Natural killer cell (primary cell): ENCODE measurements at regions of chr19 and their contacts with region 1.

Region 1: GRCh38 chr19:51372649-51373504 is at the start of gene NKG7:
- DNase-seq: peak; percentile 82 to 87
- ATAC-seq: peak; percentile 67 to 83 (median 70)
- H3K4me3 ChIP-seq: peak within 1 kb of the TSS; percentile 95
- H3K4me3 Mint-ChIP-seq: peak within 1 kb of the TSS; percentile 98
- H3K27ac ChIP-seq: peak within 1 kb of the TSS; percentile 96
- H3K27ac Mint-ChIP-seq: peak within 1 kb of the TSS; percentile 88 to 94
- H3K4me1 ChIP-seq: peaks cover 87% of the 10 kb centered on the region
- H3K4me1 Mint-ChIP-seq: peaks cover 65 to 78% of the 10 kb centered on the region in 2 donors
- H3K27me3 ChIP-seq: no peaks in the 10 kb centered on the region
- H3K27me3 Mint-ChIP-seq: no peaks in the 10 kb centered on the region
- CTCF ChIP-seq: no peak
- total RNA-seq, gene NKG7: 2,907 to 3,894 (median 3,151) TPM

Region 2: GRCh38 chr19:51354103-51354741 is 18.7 kb before region 1 on chr19:
- intact Hi-C with region 1: no loop called
- DNase-seq: no peak
- ATAC-seq: no peak
- H3K4me3 ChIP-seq: no peak overlapping the region
- H3K4me3 Mint-ChIP-seq: no peak overlapping the region
- H3K27ac ChIP-seq: no peak overlapping the region
- H3K27ac Mint-ChIP-seq: no peak overlapping the region
- H3K4me1 ChIP-seq: no peaks in the 10 kb centered on the region
- H3K4me1 Mint-ChIP-seq: peaks cover 0 to 4% of the 10 kb centered on the region in 2 donors
- H3K27me3 ChIP-seq: no peaks in the 10 kb centered on the region
- H3K27me3 Mint-ChIP-seq: no peaks in the 10 kb centered on the region
- CTCF ChIP-seq: no peak

Region 3: GRCh38 chr19:51386882-51387520 is 14.1 kb after region 1 on chr19:
- intact Hi-C with region 1: loop called (anchors 1 kb)
- DNase-seq: peak; percentile 55 to 58
- ATAC-seq: peak; percentile 83 to 93 (median 87)
- H3K4me3 ChIP-seq: peak overlapping the region; percentile 84
- H3K4me3 Mint-ChIP-seq: peak overlapping the region; percentile 97
- H3K27ac ChIP-seq: peak overlapping the region; percentile 86
- H3K27ac Mint-ChIP-seq: peak overlapping the region; percentile 96 to 98
- H3K4me1 ChIP-seq: peaks cover 68% of the 10 kb centered on the region
- H3K4me1 Mint-ChIP-seq: peaks cover 56 to 77% of the 10 kb centered on the region in 2 donors
- H3K27me3 ChIP-seq: no peaks in the 10 kb centered on the region
- H3K27me3 Mint-ChIP-seq: no peaks in the 10 kb centered on the region
- CTCF ChIP-seq: no peak

Region 4: GRCh38 chr19:51393959-51394836 is 21.3 kb after region 1 on chr19:
- intact Hi-C with region 1: loop called (anchors 1 kb)
- DNase-seq: peak; percentile 91 to 95
- ATAC-seq: peak; percentile 77 to 92 (median 85)
- H3K4me3 ChIP-seq: peak overlapping the region; percentile 49
- H3K4me3 Mint-ChIP-seq: peak overlapping the region; percentile 90
- H3K27ac ChIP-seq: peak overlapping the region; percentile 79
- H3K27ac Mint-ChIP-seq: peak overlapping the region; percentile 96 to 97
- H3K4me1 ChIP-seq: peaks cover 65% of the 10 kb centered on the region
- H3K4me1 Mint-ChIP-seq: peaks cover 66 to 85% of the 10 kb centered on the region in 2 donors
- H3K27me3 ChIP-seq: no peaks in the 10 kb centered on the region
- H3K27me3 Mint-ChIP-seq: no peaks in the 10 kb centered on the region
- CTCF ChIP-seq: no peak

Region 5: DNA sequence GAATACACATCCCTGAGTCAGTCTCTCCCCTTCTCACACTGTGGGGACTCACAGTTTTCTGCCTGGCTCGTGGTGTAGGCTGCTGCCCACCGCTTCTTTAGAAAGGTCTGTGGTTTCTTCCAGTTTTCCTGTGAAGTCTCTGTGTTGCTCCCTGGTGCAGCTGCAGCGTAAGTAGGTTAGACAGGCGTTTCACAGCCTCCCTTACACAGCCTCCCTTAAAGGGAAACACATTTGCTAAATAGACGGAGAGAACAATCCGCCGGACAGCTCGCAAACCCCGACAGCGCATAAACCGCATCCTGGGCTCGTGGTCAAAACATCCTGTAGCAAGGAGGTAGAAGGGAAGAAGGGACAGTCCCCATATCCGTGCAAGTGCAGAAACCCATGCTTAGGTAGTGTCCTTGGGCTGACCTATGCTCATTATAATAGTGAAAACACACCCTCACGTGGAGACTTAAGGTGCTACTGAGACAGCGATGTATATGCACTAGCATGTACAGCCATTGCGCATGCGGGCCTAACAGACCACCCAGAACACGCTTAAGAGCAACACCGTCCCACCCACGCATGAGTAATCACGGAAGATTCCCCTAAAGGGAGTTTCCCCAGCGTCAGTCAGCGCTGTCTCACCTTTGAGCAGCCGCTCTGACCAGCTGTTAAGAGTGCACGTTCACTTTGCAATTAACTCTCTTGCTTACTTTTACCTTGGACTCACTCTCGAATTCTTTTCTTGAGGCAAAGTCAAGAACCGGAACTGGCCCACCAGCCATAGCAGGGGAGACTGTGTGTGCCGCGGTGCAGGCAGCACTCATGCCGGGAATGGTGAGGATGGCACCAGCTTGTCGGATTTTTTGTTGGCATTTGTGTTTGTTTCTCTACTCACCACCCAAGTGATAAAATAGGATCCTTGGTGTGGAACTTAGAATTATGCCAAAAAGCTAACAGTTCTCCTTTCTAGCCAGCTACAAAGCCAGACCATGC is 68.8 kb after region 1 on chr19:
- intact Hi-C with region 1: loop called (anchors 1 kb)
- DNase-seq: peak; percentile 72 to 91
- ATAC-seq: peak; percentile 81 to 92 (median 81)
- H3K4me3 ChIP-seq: peak overlapping the region; percentile 9
- H3K4me3 Mint-ChIP-seq: peak overlapping the region; percentile 90
- H3K27ac ChIP-seq: peak overlapping the region; percentile 68
- H3K27ac Mint-ChIP-seq: peak overlapping the region; percentile 91 to 92
- H3K4me1 ChIP-seq: peaks cover 38% of the 10 kb centered on the region
- H3K4me1 Mint-ChIP-seq: peaks cover 41 to 45% of the 10 kb centered on the region in 2 donors
- H3K27me3 ChIP-seq: peaks cover 4% of the 10 kb centered on the region
- H3K27me3 Mint-ChIP-seq: peaks cover 8 to 16% of the 10 kb centered on the region in 2 donors
- CTCF ChIP-seq: no peak

Region 6: DNA sequence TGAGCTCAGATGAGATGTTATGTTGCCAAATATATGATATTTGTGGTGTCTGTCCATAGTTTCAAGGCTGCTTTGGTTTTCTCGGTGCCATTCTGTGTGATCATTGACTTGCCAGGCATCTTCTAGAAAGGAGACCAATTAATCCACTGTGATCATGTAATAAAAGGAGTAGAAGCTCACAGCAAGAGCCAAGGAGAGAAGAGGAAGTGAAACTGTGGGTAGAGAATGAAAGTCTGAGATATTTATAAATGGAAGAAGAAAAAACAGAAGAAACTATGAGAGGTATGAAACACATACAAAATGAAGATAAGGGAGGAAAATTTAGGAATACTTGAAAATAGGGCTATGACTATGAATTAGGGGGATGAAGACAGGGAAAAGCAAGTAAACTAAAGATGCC is 543.3 kb after region 1 on chr19:
- intact Hi-C with region 1: no loop called
- DNase-seq: no peak
- ATAC-seq: no peak
- H3K4me3 ChIP-seq: no peak overlapping the region
- H3K4me3 Mint-ChIP-seq: no peak overlapping the region
- H3K27ac ChIP-seq: no peak overlapping the region
- H3K27ac Mint-ChIP-seq: no peak overlapping the region
- H3K4me1 ChIP-seq: no peaks in the 10 kb centered on the region
- H3K4me1 Mint-ChIP-seq: no peaks in the 10 kb centered on the region
- H3K27me3 ChIP-seq: no peaks in the 10 kb centered on the region
- H3K27me3 Mint-ChIP-seq: peaks cover 0 to 2% of the 10 kb centered on the region in 2 donors
- CTCF ChIP-seq: no peak